Mammary epithelial cell (primary cell): ENCODE measurements at regions of chr16 and their contacts with region 1.

Region 1: DNA sequence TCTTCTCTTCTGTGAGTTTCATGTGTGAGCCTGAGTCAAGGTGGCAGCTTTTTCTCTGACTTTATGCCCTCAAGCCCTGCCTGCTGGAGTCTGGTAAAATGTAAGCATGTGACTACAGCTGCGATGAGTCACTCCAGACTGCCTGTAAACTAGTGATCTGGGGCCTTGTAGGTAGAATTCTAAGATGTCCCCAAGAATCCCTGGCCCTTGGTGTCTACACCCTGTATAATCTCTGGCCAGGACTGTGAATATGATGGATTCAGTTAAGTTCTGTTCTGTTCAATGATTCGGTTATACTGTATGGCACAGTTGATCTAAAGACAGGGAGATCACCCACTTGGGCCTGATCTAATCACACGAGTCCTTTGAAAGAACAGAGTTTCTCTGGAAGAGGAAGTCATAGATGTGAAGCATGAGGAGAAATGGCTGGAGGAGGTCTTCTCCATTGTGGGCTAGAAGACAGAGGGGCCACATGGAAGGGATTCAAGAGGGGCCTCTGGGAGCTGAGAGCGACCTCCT is 29.8 kb downstream of the PRSS54 start:
- DNase-seq: peak; percentile 90
- H3K4me3 ChIP-seq: no peak overlapping the region
- H3K27ac ChIP-seq: peak overlapping the region; percentile 29
- H3K4me1 ChIP-seq: peaks cover 15% of the 10 kb centered on the region
- H3K27me3 ChIP-seq: no peaks in the 10 kb centered on the region
- CTCF ChIP-seq: no peak

Region 2: GRCh38 chr16:58280836-58281301 is 15.8 kb after region 1 on chr16:
- CTCF ChIA-PET with region 1: no interaction called
- dilution Hi-C with region 1: no loop called
- in situ Hi-C with region 1: no loop called
- intact Hi-C with region 1: loop called (anchors 1 kb)
- DNase-seq: peak; percentile 55
- H3K4me3 ChIP-seq: peak overlapping the region in 1 of 3 experiments; percentile 11
- H3K27ac ChIP-seq: peak overlapping the region; percentile 85
- H3K4me1 ChIP-seq: peaks cover 19% of the 10 kb centered on the region
- H3K27me3 ChIP-seq: no peaks in the 10 kb centered on the region
- CTCF ChIP-seq: no peak